ENCODE measurements at regions of chr2 and their contacts with region 1.

Region 1: DNA sequence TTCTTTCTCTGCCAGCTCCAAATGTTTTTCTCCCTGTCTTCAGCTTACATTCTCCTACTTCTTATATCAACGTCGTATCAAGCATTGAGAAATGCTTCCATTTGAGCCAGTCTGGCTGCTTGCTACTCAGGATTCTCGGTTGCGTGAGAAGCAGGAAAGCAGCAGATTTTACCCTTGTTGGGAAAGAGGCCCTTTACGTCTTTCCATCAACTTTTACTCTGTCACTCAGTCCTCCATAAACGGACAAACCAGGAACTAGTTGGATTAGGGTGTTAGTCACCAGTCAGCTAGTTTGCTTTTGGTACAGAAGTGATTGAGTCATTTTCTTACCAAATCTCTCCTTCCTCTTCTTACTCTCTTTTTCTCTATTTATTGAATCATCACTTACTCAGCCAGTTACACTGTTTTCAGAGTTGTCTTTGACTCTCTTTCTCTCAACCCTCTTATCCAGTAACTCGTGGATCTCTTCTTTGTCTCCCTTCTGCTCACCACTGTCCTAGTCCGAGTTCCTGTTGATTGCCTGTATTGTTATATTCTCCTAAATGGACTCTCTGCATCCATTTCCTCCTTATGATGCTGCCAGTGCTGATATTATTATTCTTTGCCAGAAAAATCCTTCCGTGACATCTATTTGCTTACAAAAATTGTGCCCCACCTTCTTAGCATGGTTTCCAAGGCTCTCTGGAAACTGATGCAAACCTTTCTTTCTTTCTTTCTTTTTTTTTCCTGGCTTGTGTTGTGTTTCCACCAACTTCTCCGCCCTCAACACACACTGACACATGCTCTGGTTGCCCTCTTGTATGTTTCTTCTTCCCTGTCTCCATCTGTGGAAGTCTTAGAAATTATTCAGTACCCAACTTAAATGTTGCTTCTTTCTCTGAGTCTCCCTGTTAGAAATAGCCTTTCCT is 61.5 kb downstream of the VRK2 start:
- DNase-seq: peak; percentile 38 to 96
- ATAC-seq: peak; percentile 86 to 87
- H3K4me3 ChIP-seq: peak overlapping the region; percentile 8; the same call in 1 of the 3 replicates
- H3K27ac ChIP-seq: peak overlapping the region; percentile 87 to 90
- H3K4me1 ChIP-seq: peaks cover 78% of the 10 kb centered on the region
- CTCF ChIP-seq: no peak
- EP300 ChIP-seq: peak; percentile 96; a peak in 3 of 5 replicates
- POLR2A ChIP-seq: no peak
- RAD21 ChIP-seq: peak in 1 of 2 experiments; percentile 58; a peak in 4 of 5 replicates

Region 2: GRCh38 chr2:57842531-57842930 is 265.5 kb before region 1 on chr2:
- CTCF ChIA-PET with region 1: no interaction called
- POLR2A ChIA-PET with region 1: no interaction called
- DNase-seq: no peak
- ATAC-seq: no peak
- H3K4me3 ChIP-seq: no peak overlapping the region
- H3K27ac ChIP-seq: no peak overlapping the region
- H3K4me1 ChIP-seq: no peaks in the 10 kb centered on the region
- CTCF ChIP-seq: no peak
- EP300 ChIP-seq: no peak
- POLR2A ChIP-seq: no peak
- RAD21 ChIP-seq: no peak

Region 3: DNA sequence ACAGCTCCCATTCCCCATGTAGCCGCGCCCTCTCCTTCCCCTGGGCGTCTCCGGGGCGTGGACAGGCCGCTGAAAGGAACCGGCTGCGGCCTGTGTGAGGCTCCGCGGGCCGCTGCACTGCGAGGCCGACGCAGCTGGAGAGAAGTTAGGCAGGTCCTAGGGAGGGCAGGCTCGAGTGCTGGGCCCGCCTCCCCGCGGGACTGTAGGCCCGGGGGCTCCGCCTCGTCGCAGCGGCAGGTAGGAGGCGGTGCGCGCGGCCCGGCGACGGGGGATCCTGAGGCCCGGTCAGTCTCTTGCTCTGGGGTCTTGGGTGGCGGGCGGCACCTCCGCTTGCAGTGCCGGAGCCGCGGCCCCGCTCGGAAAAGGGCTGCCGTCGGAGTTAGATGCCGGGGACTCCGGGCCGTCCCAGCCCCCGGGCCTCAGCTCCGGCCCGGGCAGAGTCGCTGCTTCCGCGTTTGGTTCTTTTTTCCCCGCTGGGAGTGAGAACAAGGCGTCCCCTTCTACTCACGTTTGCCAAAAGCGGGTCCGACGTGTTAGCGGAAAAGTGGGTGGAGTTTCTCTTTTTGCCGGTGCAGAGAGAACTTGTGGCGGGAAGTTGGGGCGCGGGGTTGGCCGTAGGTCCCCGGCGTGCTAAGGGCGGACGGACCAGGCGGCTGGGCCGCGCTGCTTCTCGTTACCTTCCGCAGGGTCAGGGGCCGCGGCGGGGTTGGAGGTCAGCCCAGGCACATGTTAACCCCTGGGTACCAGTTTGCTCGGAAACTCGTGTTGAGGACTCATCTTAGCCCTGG is 61.3 kb before region 1 on chr2 and contains the start of gene VRK2:
- CTCF ChIA-PET with region 1: no interaction called
- POLR2A ChIA-PET with region 1: interaction called, 14 read pairs
- DNase-seq: peak; percentile 89 to 98
- ATAC-seq: peak; percentile 96 to 98
- H3K4me3 ChIP-seq: peak within 1 kb of the TSS; percentile 67
- H3K27ac ChIP-seq: peak within 1 kb of the TSS; percentile 94 to 98
- H3K4me1 ChIP-seq: peaks cover 52% of the 10 kb centered on the region
- CTCF ChIP-seq: no peak
- EP300 ChIP-seq: no peak
- POLR2A ChIP-seq: peak; percentile 90
- RAD21 ChIP-seq: peak; percentile 0 to 40; a peak in 2 of 5 replicates
- polyA plus RNA-seq, gene VRK2: 66.2 and 80.9 TPM in 2 replicates